H1 (cell line): ENCODE measurements at regions of chr9 and their contacts with region 1.

Region 1: DNA sequence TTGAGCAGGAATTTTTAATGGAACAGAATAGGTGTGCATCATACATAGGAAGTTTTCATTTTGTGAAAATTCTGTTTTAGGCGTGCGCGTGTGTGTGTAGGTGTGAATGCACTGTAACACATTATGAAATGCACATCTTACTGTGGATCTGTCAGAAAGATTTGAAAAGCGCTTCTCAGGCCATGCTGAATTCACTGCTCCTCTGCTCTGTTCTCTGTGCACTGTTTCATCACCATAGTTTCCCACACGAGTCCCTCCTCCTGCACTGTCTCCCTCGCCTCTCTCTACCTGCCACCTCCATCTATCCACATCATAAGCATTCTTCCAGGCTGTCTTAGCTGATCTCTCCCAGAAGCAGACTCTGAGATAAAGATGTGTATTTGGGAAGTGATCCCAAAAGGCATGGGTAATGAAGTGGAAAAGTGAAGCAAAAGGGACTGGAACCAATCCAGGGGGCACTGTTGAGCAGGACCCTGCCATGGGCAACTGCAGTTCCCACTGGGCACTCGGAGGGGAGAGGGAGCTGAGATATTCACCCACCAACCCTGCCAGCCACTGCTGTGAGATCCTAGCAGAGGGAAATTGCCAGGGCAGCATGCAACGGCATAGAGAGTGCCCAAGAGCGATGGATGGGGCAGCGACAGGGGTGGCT is 65.9 kb downstream of the GABBR2 start:
- DNase-seq: peak in 1 of 2 experiments; percentile 74
- H3K4me3 ChIP-seq: no peak overlapping the region
- H3K27ac ChIP-seq: no peak overlapping the region
- H3K4me1 ChIP-seq: peaks cover 0 to 5% (median 0%) of the 10 kb centered on the region in 4 experiments; a peak in 2 of 7 replicates
- H3K27me3 ChIP-seq: no peaks in the 10 kb centered on the region
- CTCF ChIP-seq: peak; percentile 54 to 70 (median 58)
- EP300 ChIP-seq: no peak
- POLR2A ChIP-seq: no peak
- RAD21 ChIP-seq: peak; percentile 42 to 43

Region 2: GRCh38 chr9:98627296-98627695 is 15.5 kb before region 1 on chr9:
- CTCF ChIA-PET with region 1: interaction called, 23 read pairs
- POLR2A ChIA-PET with region 1: no interaction called
- DNase-seq: no peak
- H3K4me3 ChIP-seq: no peak overlapping the region
- H3K27ac ChIP-seq: no peak overlapping the region
- H3K4me1 ChIP-seq: no peaks in the 10 kb centered on the region; a peak in 2 of 7 replicates
- H3K27me3 ChIP-seq: 0 out of 7 replicates have a peak, but pooled peaks cover 0 to 2% (median 0%) of the 10 kb centered on the region in 4 experiments
- CTCF ChIP-seq: no peak
- EP300 ChIP-seq: no peak
- POLR2A ChIP-seq: no peak
- RAD21 ChIP-seq: no peak

Region 3: GRCh38 chr9:98654247-98654646 is 11.5 kb after region 1 on chr9:
- CTCF ChIA-PET with region 1: interaction called, 19 read pairs
- POLR2A ChIA-PET with region 1: interaction called, 3 read pairs
- DNase-seq: no peak
- H3K4me3 ChIP-seq: no peak overlapping the region
- H3K27ac ChIP-seq: no peak overlapping the region
- H3K4me1 ChIP-seq: no peaks in the 10 kb centered on the region
- H3K27me3 ChIP-seq: no peaks in the 10 kb centered on the region
- CTCF ChIP-seq: no peak
- EP300 ChIP-seq: no peak
- POLR2A ChIP-seq: no peak
- RAD21 ChIP-seq: no peak

Region 4: DNA sequence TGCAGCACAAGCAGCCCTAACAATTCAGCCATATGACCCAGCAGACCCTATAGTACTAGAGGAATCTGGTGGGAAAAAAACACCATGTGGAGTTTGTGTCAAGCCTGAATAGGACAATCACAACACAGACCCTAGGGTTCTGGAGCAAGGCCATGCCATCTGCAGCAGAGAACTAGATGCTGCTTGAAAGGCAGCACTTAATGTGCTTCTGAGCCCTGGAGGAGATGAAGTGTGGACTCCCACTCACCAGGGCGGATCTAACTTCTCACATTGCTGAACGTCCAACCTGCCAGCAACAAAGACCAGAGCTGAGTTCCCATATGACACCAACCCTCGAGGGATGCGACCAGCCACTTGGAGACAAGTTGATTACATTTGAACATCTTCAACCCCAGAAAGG is 22.7 kb after region 1 on chr9:
- CTCF ChIA-PET with region 1: interaction called, 14 read pairs
- POLR2A ChIA-PET with region 1: no interaction called
- DNase-seq: no peak
- H3K4me3 ChIP-seq: no peak overlapping the region
- H3K27ac ChIP-seq: no peak overlapping the region
- H3K4me1 ChIP-seq: peaks cover 0 to 6% (median 0%) of the 10 kb centered on the region in 4 experiments; a peak in 1 of 7 replicates
- H3K27me3 ChIP-seq: no peaks in the 10 kb centered on the region
- CTCF ChIP-seq: no peak
- EP300 ChIP-seq: no peak
- POLR2A ChIP-seq: no peak
- RAD21 ChIP-seq: no peak